MCF 10A (cell line): ENCODE measurements at regions of chr19 and their contacts with region 1.

Region 1: GRCh38 chr19:51726049-51726448 is 2.3 kb upstream of the HAS1 start:
- DNase-seq: peak; percentile 94
- H3K4me3 Mint-ChIP-seq: peak overlapping the region; percentile 45
- H3K27ac Mint-ChIP-seq: peak overlapping the region; percentile 85
- H3K4me1 Mint-ChIP-seq: peaks cover 51% of the 10 kb centered on the region
- H3K27me3 Mint-ChIP-seq: no peaks in the 10 kb centered on the region
- CTCF ChIP-seq: no peak

Region 2: DNA sequence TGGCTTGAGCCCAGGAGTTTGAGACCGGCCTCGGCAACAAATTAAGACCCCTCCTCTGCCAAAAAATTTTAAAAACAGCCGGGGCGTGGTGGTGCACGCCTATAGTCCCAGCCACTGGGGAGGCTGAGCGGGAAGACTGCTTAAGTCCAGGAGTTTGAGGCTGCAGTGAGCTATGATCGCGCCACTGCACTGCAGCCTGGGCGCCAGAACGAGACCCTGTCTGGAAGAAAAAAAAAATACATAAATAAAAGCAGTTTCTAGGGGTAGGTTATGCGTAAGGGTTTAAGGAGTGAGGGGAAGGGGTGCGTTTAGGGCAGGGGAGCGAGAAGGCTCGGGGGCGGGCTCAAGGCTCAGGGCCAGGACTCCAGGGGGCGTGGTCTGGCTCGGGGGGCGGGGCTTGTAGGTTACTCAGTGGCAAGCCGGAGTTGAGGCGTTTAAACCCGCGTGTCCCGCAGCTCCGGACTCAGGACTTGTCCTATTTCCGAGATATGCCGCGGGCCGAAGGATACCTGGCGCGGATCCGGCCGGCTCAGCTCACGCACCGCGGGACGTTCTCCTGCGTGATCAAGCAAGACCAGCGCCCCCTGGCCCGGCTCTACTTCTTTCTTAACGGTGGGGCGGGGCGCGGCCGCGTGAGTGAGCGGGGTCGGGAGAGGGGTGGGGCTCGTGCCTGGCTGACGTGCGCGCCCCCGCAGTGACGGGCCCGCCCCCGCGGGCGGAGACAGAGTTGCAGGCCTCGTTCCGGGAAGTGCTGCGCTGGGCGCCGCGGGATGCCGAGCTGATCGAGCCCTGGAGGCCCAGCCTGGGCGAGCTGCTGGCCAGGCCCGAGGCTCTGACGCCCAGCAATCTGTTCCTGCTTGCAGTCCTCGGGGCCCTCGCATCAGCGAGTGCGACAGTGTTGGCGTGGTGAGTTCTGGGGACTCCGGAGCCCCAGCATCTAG is 22.2 kb before region 1 on chr19:
- CTCF ChIA-PET with region 1: no interaction called
- POLR2A ChIA-PET with region 1: interaction called, 25 read pairs
- intact Hi-C with region 1: no loop called
- DNase-seq: peak; percentile 95
- H3K4me3 Mint-ChIP-seq: peak overlapping the region; percentile 83
- H3K27ac Mint-ChIP-seq: peak overlapping the region; percentile 90
- H3K4me1 Mint-ChIP-seq: peaks cover 59% of the 10 kb centered on the region
- H3K27me3 Mint-ChIP-seq: no peaks in the 10 kb centered on the region
- CTCF ChIP-seq: no peak

Region 3: GRCh38 chr19:51751655-51752054 is 25.6 kb after region 1 on chr19 and contains the start of gene FPR1:
- CTCF ChIA-PET with region 1: interaction called, 3 read pairs
- POLR2A ChIA-PET with region 1: interaction called, 14 read pairs
- intact Hi-C with region 1: loop called (anchors 2 kb)
- DNase-seq: peak; percentile 63
- H3K4me3 Mint-ChIP-seq: peak within 1 kb of the TSS; percentile 84
- H3K27ac Mint-ChIP-seq: peak within 1 kb of the TSS; percentile 96
- H3K4me1 Mint-ChIP-seq: peaks cover 26% of the 10 kb centered on the region
- H3K27me3 Mint-ChIP-seq: no peaks in the 10 kb centered on the region
- CTCF ChIP-seq: no peak
- total RNA-seq, gene FPR1: 6.2 and 8.6 TPM in 2 replicates